ENCODE measurements at regions of chr22 and their contacts with region 1.

Region 1: DNA sequence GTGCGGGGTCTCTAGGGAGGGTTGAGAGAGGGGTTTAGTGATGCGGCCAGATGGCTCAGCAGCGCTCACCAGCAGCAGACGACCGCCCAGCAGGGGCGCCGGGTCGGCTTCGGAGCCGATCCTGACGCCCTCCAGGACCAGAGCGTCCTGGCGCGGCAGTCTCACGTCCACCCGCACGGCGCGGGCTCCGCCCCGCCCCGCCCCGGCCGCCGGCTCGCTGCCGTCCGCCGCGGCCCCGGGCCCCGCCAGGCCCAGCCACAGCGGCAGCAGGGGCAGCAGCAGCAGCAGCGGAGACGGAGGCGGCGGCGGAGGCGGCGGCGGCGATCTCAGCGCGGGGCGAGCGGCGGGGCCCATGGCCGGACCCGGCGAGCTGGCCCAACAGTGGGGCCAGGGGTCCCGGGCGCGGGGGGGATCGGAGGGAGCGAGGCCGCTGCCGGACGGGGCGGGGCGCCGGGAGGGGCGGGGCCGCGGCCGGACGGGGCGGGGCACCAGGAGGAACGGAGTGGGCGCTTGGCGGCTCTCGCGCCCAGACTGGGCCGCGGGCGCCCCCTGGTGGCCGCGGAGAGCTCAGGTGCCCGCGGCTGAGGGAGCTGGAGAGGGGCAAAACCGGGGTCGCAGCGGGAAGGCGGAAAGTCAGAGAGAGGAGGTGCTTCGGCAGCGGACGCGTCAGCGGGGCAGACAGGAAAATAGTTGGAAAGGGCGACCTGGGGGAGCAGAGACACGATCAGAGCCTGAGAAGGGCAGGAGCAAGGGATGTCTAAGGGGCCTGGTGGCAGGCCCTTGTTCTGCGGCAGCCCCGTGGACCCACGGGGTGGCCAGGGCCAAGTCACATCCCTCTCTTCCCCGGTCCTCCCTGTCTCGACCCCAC is at the start of gene RNF215:
- DNase-seq: peak; percentile 74 to 96 (median 90)
- ATAC-seq: peak; percentile 92 to 96 (median 94)
- H3K4me3 ChIP-seq: peak within 1 kb of the TSS; percentile 43 to 63 (median 58)
- H3K27ac ChIP-seq: peak within 1 kb of the TSS in 1 of 4 donors; percentile 41
- H3K4me1 ChIP-seq: peaks cover 0 to 6% (median 0%) of the 10 kb centered on the region in 3 donors
- H3K27me3 ChIP-seq: no peaks in the 10 kb centered on the region
- CTCF ChIP-seq: peak; percentile 92 to 97 (median 96)
- total RNA-seq, gene RNF215: 6.0 to 11.6 (median 8.9) TPM

Region 2: DNA sequence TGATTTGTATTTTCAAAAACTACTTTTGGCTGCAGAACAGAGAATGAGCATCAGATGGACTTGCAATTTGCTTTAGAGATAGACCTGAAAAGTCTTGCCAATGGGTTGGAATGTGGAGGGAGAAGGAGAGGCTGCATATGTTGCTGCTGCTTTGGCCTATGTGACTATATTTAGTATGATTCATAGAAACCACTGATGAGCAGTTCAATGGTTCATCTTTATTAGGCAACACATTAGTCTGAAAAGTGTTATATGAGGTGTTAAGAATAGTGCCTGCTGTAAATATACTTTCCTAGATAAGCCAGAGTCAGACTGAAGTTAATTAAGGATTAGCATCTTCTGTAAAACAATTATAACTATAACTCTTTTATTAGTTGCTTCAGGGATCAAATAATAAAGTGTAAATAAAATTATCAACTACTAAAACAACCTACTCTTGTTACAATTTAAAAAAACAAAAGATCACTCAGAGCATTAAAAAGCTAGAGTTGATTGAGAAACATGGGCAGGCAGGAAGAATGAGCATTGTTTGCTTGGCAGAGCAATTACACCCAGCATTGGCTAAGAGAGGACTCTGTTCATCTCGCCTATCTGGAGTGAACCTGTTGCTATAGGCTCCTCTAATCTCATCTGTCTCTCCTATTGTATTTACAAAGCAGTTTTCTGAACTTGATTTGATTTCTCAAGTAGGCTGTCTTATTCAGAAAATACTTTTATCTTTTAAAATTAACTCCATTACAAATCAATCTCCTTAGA is 270.7 kb before region 1 on chr22:
- intact Hi-C with region 1: loop called in 1 of 3 experiments (anchors 5 kb)
- DNase-seq: no peak
- ATAC-seq: no peak
- H3K4me3 ChIP-seq: no peak overlapping the region
- H3K27ac ChIP-seq: no peak overlapping the region
- H3K4me1 ChIP-seq: no peaks in the 10 kb centered on the region
- H3K27me3 ChIP-seq: no peaks in the 10 kb centered on the region
- CTCF ChIP-seq: no peak

Region 3: GRCh38 chr22:30262917-30263741 is 124.1 kb before region 1 on chr22:
- intact Hi-C with region 1: loop called in 2 of 3 experiments (anchors 5 kb)
- DNase-seq: peak; percentile 43 to 91 (median 77)
- ATAC-seq: peak; percentile 56 to 80 (median 66)
- H3K4me3 ChIP-seq: peak overlapping the region in 1 of 4 donors; percentile 22
- H3K27ac ChIP-seq: no peak overlapping the region
- H3K4me1 ChIP-seq: no peaks in the 10 kb centered on the region
- H3K27me3 ChIP-seq: no peaks in the 10 kb centered on the region
- CTCF ChIP-seq: peak; percentile 97 to 98 (median 98)

Region 4: DNA sequence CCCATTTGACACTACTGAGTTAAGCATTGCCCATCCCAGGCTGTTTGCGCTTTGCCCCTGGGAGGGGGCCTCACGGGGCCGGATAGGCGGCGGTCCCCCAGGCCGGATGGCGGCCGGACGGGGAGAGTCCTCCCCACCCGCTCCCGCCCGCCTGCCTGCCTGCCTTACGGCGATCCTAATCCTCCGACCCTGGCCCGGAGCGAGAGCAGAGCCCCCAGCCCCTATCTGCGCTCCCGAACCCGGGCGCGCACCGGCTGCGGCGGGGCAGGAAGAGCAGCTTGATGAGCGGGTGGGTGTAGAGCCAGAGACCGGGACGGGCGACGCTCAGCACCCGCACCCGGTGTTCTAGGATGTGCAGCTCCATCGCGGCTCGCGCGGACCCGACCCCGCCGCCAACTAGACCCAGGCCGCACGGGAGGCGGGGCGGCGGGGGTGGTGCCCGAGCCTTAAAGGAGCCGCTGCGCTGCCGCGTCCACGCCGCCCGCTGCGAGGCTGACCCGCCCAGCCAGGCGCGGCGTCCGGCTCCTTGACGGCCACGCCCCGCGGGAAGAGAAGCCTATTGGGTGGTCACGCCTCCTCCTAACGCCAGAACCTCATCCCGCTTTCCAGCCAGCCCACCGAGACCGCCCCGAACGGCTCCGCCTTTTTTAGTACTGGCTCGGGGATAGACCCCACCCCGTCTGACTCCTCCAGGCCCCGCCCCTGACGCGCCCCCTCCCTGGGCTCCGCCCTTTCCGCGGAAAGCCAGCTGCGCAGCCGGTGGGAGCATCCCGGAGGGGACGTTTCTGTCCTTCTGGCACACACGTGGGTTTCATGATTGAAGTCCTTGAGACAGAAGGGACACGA is 97.8 kb before region 1 on chr22 and contains the start of gene CASTOR1:
- intact Hi-C with region 1: loop called in 2 of 3 experiments (anchors 5 kb)
- DNase-seq: peak; percentile 95 to 99 (median 98)
- ATAC-seq: peak; percentile 86 to 88 (median 86)
- H3K4me3 ChIP-seq: peak within 1 kb of the TSS; percentile 73 to 96 (median 84)
- H3K27ac ChIP-seq: peak within 1 kb of the TSS; percentile 68 to 80 (median 76)
- H3K4me1 ChIP-seq: peaks cover 10 to 23% (median 22%) of the 10 kb centered on the region in 3 donors
- H3K27me3 ChIP-seq: no peaks in the 10 kb centered on the region
- CTCF ChIP-seq: no peak
- total RNA-seq, gene CASTOR1: 1.8 to 7.3 (median 3.8) TPM

Region 5: GRCh38 chr22:30830907-30831306 is 443.7 kb after region 1 on chr22:
- intact Hi-C with region 1: no loop called
- DNase-seq: peak in 1 of 6 donors; percentile 18
- ATAC-seq: peak; percentile 48 to 85 (median 72)
- H3K4me3 ChIP-seq: no peak overlapping the region
- H3K27ac ChIP-seq: no peak overlapping the region
- H3K4me1 ChIP-seq: no peaks in the 10 kb centered on the region
- H3K27me3 ChIP-seq: no peaks in the 10 kb centered on the region
- CTCF ChIP-seq: no peak

Measured in pancreas (tissue), 10 donors.